ENCODE measurements at regions of chr15 and their contacts with region 1.

Region 1: DNA sequence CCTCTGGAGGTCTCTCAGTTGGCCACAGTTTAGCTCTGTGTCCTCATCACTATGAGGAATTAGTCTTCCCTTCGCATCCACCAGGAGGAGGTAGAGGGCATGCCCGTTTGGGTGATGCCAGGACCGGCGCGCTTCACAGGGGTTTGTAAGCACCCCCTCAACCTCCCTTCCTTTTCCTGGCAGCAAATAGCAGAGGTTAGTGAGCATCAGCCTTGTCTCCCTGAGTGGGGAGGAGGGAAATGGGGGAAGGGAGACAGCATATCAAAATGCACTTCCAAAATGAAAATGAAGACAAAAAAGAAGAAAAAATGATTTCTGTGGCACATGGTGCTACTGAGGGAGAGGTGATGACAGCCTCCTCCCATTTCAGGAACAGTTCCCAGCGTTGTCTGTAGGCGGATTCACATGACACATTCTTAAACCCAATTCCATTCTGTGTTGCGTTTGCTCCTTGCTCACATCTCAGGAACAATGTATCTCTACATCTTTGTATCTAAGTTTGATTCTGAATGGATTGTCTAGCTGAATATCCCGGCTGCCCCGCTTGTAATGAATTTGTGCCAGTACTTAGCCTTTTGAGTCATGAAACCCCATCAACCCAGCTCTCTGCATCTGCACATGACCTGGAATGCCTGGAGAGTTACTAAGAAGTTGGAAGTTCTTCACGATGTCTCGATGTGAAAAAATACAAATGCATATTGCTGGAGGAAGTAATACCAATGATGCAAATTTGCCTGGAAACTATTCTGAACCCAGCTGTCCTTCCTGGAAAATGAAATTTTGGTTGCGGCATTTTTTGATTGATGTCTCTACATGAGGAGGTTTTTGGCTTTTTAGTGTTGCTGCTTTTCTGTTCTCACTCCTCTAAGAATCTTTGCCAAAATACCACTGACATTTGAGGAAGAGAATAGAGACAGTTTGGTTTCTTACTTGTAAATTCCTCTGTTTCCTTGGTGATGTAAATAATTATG is 45.2 kb downstream of the TYRO3 start:
- DNase-seq: peak; percentile 84
- H3K4me3 ChIP-seq: peak overlapping the region; percentile 31 to 51
- H3K27ac ChIP-seq: peak overlapping the region in 1 of 2 experiments; percentile 64; a peak in 2 of 4 replicates
- H3K4me1 ChIP-seq: peaks cover 3 to 5% of the 10 kb centered on the region in 2 experiments; a peak in 3 of 4 replicates
- H3K27me3 ChIP-seq: no peaks in the 10 kb centered on the region
- CTCF ChIP-seq: peak; percentile 85
- EP300 ChIP-seq: no peak
- RAD21 ChIP-seq: peak; percentile 74

Region 2: DNA sequence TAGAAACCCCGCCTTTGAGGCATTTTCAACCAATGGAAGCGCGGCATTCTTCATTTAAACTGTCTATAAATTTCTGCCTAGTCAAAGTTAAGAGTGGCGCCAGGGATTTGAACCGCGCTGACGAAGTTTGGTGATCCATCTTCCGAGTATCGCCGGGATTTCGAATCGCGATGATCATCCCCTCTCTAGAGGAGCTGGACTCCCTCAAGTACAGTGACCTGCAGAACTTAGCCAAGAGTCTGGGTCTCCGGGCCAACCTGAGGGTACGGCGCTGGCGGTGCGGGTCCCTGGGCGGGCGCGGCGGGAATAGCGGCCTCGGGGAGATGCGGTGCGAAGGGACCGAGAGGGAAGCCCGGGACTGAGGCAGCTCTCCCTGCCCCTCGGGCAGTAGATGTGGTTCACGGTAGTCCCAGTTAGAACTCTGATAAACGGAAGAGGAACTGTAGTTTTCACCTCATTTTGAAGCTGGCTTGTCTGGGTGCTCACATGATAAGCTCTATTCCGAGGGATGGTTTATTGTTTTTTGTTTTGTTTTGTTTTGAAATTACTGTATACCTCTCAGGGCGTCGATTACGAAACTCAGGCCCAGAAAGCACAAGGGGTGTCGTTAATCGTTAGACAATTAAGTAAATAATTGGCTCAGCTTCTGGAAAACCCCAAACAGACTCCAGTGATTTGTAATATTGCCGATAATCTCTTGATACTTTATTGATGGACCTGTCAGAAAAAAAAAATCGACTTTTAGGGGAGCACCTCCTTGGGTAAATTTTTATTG is 271.3 kb before region 1 on chr15 and contains the start of gene NUSAP1:
- CTCF ChIA-PET with region 1: no interaction called
- POLR2A ChIA-PET with region 1: no interaction called
- DNase-seq: no peak
- H3K4me3 ChIP-seq: peak within 1 kb of the TSS; percentile 77 to 95
- H3K27ac ChIP-seq: peak within 1 kb of the TSS; percentile 64 to 81
- H3K4me1 ChIP-seq: peaks cover 2 to 6% of the 10 kb centered on the region in 2 experiments; a peak in 1 of 4 replicates
- H3K27me3 ChIP-seq: no peaks in the 10 kb centered on the region
- CTCF ChIP-seq: no peak
- EP300 ChIP-seq: no peak
- RAD21 ChIP-seq: no peak
- polyA plus RNA-seq, gene NUSAP1: 41.1 and 43.5 TPM in 2 replicates

Region 3: GRCh38 chr15:41620536-41621199 is 16.4 kb after region 1 on chr15:
- CTCF ChIA-PET with region 1: interaction called, 14 read pairs
- POLR2A ChIA-PET with region 1: no interaction called
- DNase-seq: peak; percentile 18
- H3K4me3 ChIP-seq: peak overlapping the region; percentile 50 to 63
- H3K27ac ChIP-seq: peak overlapping the region in 1 of 2 experiments; percentile 80; a peak in 2 of 4 replicates
- H3K4me1 ChIP-seq: peaks cover 0 to 10% of the 10 kb centered on the region in 2 experiments; a peak in 1 of 4 replicates
- H3K27me3 ChIP-seq: no peaks in the 10 kb centered on the region
- CTCF ChIP-seq: no peak
- EP300 ChIP-seq: no peak
- RAD21 ChIP-seq: no peak

Region 4: DNA sequence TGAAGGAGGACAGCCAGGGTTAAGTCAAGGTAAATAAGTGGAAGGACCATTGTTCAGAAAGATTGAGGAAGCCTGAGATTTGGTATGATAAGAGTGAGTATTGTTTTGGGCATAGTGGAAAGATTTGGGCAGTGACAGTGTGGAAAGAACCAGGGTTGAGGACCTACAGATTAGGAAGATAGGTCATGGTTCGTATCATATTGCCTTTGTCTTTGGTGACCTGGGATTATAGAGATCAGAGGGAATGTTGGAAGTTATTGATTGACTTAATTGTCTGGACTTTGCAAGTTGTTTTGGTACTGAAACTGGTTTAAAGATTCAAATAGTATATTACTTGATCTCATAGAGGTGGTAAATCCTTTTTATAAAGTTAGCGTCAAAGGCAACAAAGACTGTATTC is 32.9 kb after region 1 on chr15:
- CTCF ChIA-PET with region 1: no interaction called
- POLR2A ChIA-PET with region 1: no interaction called
- DNase-seq: no peak
- H3K4me3 ChIP-seq: no peak overlapping the region
- H3K27ac ChIP-seq: no peak overlapping the region
- H3K4me1 ChIP-seq: no peaks in the 10 kb centered on the region; a peak in 1 of 4 replicates
- H3K27me3 ChIP-seq: no peaks in the 10 kb centered on the region
- CTCF ChIP-seq: no peak
- EP300 ChIP-seq: no peak
- RAD21 ChIP-seq: no peak